ENCODE measurements at regions of chr2 and their contacts with region 1.

Region 1: GRCh38 chr2:241092677-241093076 is 9.4 kb downstream of the MTERF4 start:
- DNase-seq: no peak
- ATAC-seq: peak; percentile 27
- H3K4me3 ChIP-seq: peak overlapping the region in 2 of 3 experiments; percentile 12 to 57; a peak in 3 of 6 replicates
- H3K27ac ChIP-seq: peak overlapping the region; percentile 83
- H3K4me1 ChIP-seq: peaks cover 51% of the 10 kb centered on the region
- H3K27me3 ChIP-seq: no peaks in the 10 kb centered on the region
- CTCF ChIP-seq: no peak
- EP300 ChIP-seq: no peak
- POLR2A ChIP-seq: no peak
- RAD21 ChIP-seq: no peak

Region 2: GRCh38 chr2:241029599-241030332 is 62.9 kb before region 1 on chr2:
- CTCF ChIA-PET with region 1: no interaction called
- POLR2A ChIA-PET with region 1: no interaction called
- in situ Hi-C with region 1: no loop called
- intact Hi-C with region 1: no loop called
- DNase-seq: no peak
- ATAC-seq: no peak; the same call in 2 of the 3 replicates
- H3K4me3 ChIP-seq: no peak overlapping the region
- H3K27ac ChIP-seq: no peak overlapping the region
- H3K4me1 ChIP-seq: peaks cover 8% of the 10 kb centered on the region; the same call in 1 of the 2 replicates
- H3K27me3 ChIP-seq: no peaks in the 10 kb centered on the region; a peak in 1 of 5 replicates
- CTCF ChIP-seq: no peak
- EP300 ChIP-seq: no peak
- POLR2A ChIP-seq: no peak
- RAD21 ChIP-seq: no peak

Region 3: DNA sequence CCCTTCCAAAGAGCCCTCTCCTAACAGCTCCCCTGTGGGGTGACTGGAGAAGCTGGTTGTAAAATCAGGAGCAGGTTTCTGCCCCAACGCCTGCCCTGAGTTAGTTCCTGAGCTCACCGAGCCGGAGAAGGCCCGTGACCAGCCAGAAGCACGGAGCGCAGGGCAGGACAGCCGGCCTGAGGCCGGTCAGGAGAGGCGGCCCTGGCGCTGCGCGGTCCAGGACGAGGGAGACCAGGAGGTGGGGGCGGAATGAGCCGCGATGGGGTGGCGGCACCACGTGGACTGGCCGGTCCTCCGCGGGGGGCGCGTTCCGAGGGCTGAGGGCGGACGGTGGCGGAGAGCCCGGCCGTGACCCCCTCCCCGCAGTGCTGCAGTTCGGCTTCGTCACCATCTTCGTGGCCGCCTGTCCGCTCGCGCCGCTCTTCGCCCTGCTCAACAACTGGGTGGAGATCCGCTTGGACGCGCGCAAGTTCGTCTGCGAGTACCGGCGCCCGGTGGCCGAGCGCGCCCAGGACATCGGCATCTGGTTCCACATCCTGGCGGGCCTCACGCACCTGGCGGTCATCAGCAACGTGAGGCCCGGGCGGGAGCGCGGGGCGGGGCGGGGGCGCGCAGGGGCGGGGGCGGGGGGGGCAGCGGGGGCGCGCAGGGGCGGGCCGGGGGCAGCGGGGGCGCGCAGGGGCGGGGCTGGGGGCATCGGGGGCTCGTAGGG is 124.8 kb after region 1 on chr2:
- CTCF ChIA-PET with region 1: no interaction called
- POLR2A ChIA-PET with region 1: no interaction called
- in situ Hi-C with region 1: loop called (anchors 5 kb)
- intact Hi-C with region 1: loop called (anchors 5 kb)
- DNase-seq: peak; percentile 80
- ATAC-seq: peak; percentile 75
- H3K4me3 ChIP-seq: peak overlapping the region; percentile 50 to 76 (median 74)
- H3K27ac ChIP-seq: peak overlapping the region; percentile 79
- H3K4me1 ChIP-seq: peaks cover 64% of the 10 kb centered on the region
- H3K27me3 ChIP-seq: peaks cover 4 to 21% of the 10 kb centered on the region in 2 experiments; a peak in 3 of 5 replicates
- CTCF ChIP-seq: peak; percentile 56
- EP300 ChIP-seq: 0 out of 4 replicates have a peak, but pooled peaks of 1 of the 2 experiments have one; percentile 28
- POLR2A ChIP-seq: peak in 1 of 2 experiments; percentile 66; a peak in 2 of 4 replicates
- RAD21 ChIP-seq: peak; percentile 69

Region 4: GRCh38 chr2:241224018-241224850 is 131.6 kb after region 1 on chr2:
- CTCF ChIA-PET with region 1: no interaction called
- POLR2A ChIA-PET with region 1: interaction called, 6 read pairs
- in situ Hi-C with region 1: loop called (anchors 5 kb)
- intact Hi-C with region 1: loop called (anchors 5 kb)
- DNase-seq: peak; percentile 87
- ATAC-seq: peak; percentile 73
- H3K4me3 ChIP-seq: peak overlapping the region; percentile 19 to 70 (median 24); a peak in 5 of 6 replicates
- H3K27ac ChIP-seq: peak overlapping the region; percentile 78
- H3K4me1 ChIP-seq: peaks cover 62% of the 10 kb centered on the region
- H3K27me3 ChIP-seq: no peaks in the 10 kb centered on the region
- CTCF ChIP-seq: peak; percentile 42
- EP300 ChIP-seq: no peak; a peak in 1 of 4 replicates
- POLR2A ChIP-seq: no peak; a peak in 1 of 4 replicates
- RAD21 ChIP-seq: peak; percentile 14